ENCODE measurements at regions of chr2 and their contacts with region 1.

Region 1: GRCh38 chr2:181656450-181657291 is at the start of gene CERKL:
- DNase-seq: peak; percentile 66 to 83
- H3K4me3 ChIP-seq: peak within 1 kb of the TSS; percentile 41 to 79 (median 65)
- H3K27ac ChIP-seq: no peak within 1 kb of the TSS
- H3K4me1 ChIP-seq: peaks cover 4 to 11% (median 7%) of the 10 kb centered on the region in 4 experiments; a peak in 5 of 7 replicates
- H3K27me3 ChIP-seq: peaks cover 23 to 53% (median 45%) of the 10 kb centered on the region in 4 experiments
- CTCF ChIP-seq: peak in 2 of 3 experiments; percentile 3 to 27; a peak in 2 of 4 replicates
- EP300 ChIP-seq: no peak
- POLR2A ChIP-seq: no peak
- RAD21 ChIP-seq: no peak
- total RNA-seq, gene CERKL: not detected in 2 replicates

Region 2: DNA sequence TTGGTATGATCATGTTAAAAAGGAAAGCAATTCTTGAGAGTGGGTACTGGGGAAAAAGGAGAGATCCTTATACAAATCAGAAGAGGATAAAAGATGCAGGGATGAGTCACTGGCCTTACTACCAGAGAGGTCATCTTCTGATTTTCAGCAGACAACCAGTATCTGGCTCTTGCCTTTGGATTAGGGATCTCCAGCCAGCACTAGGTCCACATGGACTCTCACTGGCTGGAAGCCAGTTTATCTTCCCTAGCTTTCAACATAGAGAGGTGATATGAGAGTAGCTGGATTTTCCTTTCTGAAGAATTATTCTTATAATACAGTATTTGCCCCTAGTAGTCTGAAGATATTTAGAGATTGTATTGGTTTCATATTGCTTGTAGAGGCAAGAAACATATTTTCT is 30.0 kb before region 1 on chr2:
- CTCF ChIA-PET with region 1: no interaction called
- POLR2A ChIA-PET with region 1: no interaction called
- DNase-seq: no peak
- H3K4me3 ChIP-seq: no peak overlapping the region
- H3K27ac ChIP-seq: no peak overlapping the region
- H3K4me1 ChIP-seq: no peaks in the 10 kb centered on the region
- H3K27me3 ChIP-seq: peaks cover 0 to 2% (median 0%) of the 10 kb centered on the region in 4 experiments; a peak in 1 of 7 replicates
- CTCF ChIP-seq: no peak
- EP300 ChIP-seq: no peak
- POLR2A ChIP-seq: no peak
- RAD21 ChIP-seq: no peak

Region 3: DNA sequence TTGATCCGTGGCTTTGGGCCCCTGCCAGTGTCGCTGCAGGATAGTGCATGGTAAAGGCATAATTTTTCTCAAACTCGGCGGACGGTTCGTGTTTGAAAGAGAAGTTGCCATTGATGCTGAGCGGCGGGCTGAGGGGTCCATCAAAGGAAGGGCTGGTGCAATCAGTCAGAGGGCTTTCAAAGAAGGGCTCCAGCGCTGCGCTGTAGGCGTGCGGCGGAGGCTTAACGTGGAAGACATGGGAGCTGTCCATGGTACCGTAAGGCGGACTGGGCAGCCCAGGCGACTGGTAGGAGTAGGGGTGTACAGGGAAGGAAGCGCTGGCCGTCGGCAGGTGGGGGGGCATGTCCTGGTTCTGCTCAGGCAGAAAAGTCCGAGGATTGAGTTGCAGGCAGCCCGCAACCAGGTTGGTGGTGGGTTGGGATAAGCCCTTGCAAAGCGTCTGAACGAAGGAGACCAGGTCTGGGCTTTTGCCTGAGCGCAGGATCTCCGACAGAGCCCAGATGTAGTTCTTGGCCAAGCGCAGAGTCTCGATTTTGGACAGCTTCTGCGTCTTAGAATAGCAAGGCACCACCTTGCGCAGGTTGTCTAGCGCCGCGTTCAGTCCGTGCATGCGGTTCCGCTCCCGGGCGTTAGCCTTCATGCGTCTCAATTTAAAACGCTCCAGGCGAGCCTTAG is 21.4 kb after region 1 on chr2:
- CTCF ChIA-PET with region 1: interaction called, 16 read pairs
- POLR2A ChIA-PET with region 1: interaction called, 12 read pairs
- DNase-seq: peak in 1 of 2 experiments; percentile 89
- H3K4me3 ChIP-seq: peak overlapping the region in 1 of 4 experiments; percentile 44; a peak in 2 of 8 replicates
- H3K27ac ChIP-seq: no peak overlapping the region
- H3K4me1 ChIP-seq: peaks cover 7 to 29% (median 19%) of the 10 kb centered on the region in 4 experiments
- H3K27me3 ChIP-seq: peaks cover 56 to 75% (median 62%) of the 10 kb centered on the region in 4 experiments
- CTCF ChIP-seq: no peak
- EP300 ChIP-seq: peak in 1 of 2 experiments; percentile 51; a peak in 1 of 3 replicates
- POLR2A ChIP-seq: no peak
- RAD21 ChIP-seq: peak; percentile 8 to 19; a peak in 1 of 4 replicates

Region 4: GRCh38 chr2:181683518-181684453 is 27.1 kb after region 1 on chr2:
- CTCF ChIA-PET with region 1: interaction called, 16 read pairs
- POLR2A ChIA-PET with region 1: interaction called, 12 read pairs
- DNase-seq: peak; percentile 47 to 78
- H3K4me3 ChIP-seq: peak overlapping the region; percentile 22 to 66 (median 42)
- H3K27ac ChIP-seq: no peak overlapping the region
- H3K4me1 ChIP-seq: peaks cover 16 to 42% (median 23%) of the 10 kb centered on the region in 4 experiments
- H3K27me3 ChIP-seq: peaks cover 64 to 89% (median 76%) of the 10 kb centered on the region in 4 experiments
- CTCF ChIP-seq: no peak
- EP300 ChIP-seq: no peak
- POLR2A ChIP-seq: no peak
- RAD21 ChIP-seq: no peak

Measured in H1 (cell line).